K562 (cell line): ENCODE measurements at regions of chr6 and their contacts with region 1.

Region 1: GRCh38 chr6:144582939-144583613 is 297.9 kb downstream of the UTRN start:
- DNase-seq: peak in 2 of 4 experiments; percentile 30 to 61
- ATAC-seq: peak; percentile 78
- H3K4me3 ChIP-seq: peak overlapping the region; percentile 33
- H3K27ac ChIP-seq: peak overlapping the region; percentile 38; the same call in 1 of the 3 replicates
- H3K4me1 ChIP-seq: peaks cover 0 to 8% of the 10 kb centered on the region in 2 experiments; a peak in 2 of 5 replicates
- H3K27me3 ChIP-seq: no peaks in the 10 kb centered on the region
- CTCF ChIP-seq: no peak
- EP300 ChIP-seq: no peak
- POLR2A ChIP-seq: no peak
- RAD21 ChIP-seq: no peak

Region 2: DNA sequence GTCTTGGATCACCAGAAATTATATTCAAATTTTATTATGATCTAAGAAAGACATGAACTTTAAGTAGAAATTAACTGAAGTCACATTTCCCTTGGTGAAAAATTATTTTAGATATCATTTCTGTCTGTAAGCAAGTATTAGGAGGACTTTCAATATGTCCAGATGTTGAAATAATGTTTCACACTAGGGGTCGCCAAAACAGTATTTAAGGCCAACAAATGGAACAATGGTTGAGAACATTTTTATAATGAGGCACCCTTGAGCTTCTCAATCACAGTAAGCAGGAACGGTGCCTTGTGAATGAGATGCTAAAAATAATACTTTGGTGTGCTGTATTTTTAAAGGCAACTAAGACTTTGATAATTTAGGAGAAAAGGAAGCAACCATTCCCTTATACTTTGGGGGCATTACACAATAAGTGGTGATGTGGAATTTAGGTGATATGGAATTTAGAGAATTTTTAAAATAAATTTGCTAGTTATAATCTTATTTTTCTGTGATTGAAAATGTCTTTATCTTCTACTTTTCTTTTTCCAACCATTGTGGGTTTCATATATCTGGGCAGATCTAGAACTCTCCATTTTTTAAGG is 478.1 kb before region 1 on chr6:
- CTCF ChIA-PET with region 1: no interaction called
- POLR2A ChIA-PET with region 1: no interaction called
- in situ Hi-C with region 1: no loop called
- intact Hi-C with region 1: loop called (anchors 5 kb)
- DNase-seq: peak; percentile 31 to 82 (median 56)
- ATAC-seq: peak; percentile 91
- H3K4me3 ChIP-seq: no peak overlapping the region
- H3K27ac ChIP-seq: no peak overlapping the region
- H3K4me1 ChIP-seq: no peaks in the 10 kb centered on the region
- H3K27me3 ChIP-seq: peaks cover 0 to 2% of the 10 kb centered on the region in 2 experiments; a peak in 1 of 5 replicates
- CTCF ChIP-seq: peak; percentile 66 to 89 (median 70)
- EP300 ChIP-seq: no peak
- POLR2A ChIP-seq: no peak
- RAD21 ChIP-seq: peak; percentile 96 to 98

Region 3: DNA sequence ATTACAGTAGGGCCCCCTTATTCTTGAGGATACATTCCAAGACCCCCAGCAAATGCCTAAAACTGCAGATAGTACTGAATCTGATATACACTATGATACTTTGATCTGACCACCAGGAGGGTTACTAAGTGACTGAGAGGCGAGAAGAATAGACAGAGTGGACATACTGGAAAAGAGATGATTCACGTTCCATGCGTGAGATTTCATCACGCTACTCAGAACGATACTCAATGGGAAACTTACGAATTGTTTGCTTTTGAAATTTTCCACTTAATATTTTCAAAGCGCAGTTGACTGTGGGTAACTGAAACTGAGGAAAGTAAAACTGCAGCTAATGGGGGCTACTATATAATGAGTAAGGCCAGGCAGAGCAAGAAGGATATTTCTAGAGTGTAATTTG is 371.9 kb before region 1 on chr6:
- CTCF ChIA-PET with region 1: no interaction called
- POLR2A ChIA-PET with region 1: no interaction called
- in situ Hi-C with region 1: no loop called
- intact Hi-C with region 1: no loop called
- DNase-seq: no peak
- ATAC-seq: no peak
- H3K4me3 ChIP-seq: no peak overlapping the region
- H3K27ac ChIP-seq: no peak overlapping the region
- H3K4me1 ChIP-seq: peaks cover 10 to 14% of the 10 kb centered on the region in 2 experiments
- H3K27me3 ChIP-seq: peaks cover 0 to 17% of the 10 kb centered on the region in 2 experiments; a peak in 3 of 5 replicates
- CTCF ChIP-seq: no peak
- EP300 ChIP-seq: no peak
- POLR2A ChIP-seq: no peak
- RAD21 ChIP-seq: no peak

Region 4: DNA sequence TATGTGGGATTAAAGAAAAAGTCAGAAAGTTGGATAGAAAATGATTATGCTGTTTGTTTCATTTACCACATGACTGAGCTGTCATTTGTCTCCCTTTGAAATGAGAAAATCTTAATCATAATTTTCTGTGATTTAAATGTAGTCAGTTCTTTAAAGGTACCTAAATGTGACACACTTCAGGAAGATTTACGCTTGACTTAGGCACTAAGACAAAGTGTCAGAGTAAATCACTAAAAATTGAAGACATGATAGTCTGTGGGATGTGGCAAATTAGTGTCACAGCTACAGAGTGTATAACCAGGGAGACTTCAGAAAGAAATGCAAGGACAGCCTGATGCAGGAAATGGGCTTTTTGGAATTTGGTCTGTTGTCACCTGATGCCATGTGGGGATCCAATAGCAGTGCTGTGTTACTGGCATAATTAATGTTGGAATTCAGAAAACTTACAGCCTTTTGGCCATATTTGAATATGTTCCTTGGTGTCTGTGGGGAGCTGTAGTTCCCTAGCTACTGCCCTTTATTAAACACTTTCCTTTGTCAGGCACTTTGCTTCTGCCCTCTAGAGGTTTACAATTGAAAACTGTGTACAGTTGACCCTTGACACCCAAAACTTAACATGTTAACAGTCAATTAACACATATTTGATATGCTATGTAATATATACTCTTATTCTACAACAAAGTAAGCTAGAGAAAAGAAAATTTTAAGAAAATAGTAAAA is 195.9 kb after region 1 on chr6:
- CTCF ChIA-PET with region 1: no interaction called
- POLR2A ChIA-PET with region 1: no interaction called
- in situ Hi-C with region 1: no loop called
- intact Hi-C with region 1: loop called (anchors 1 kb)
- DNase-seq: no peak
- ATAC-seq: peak; percentile 60; the same call in 1 of the 3 replicates
- H3K4me3 ChIP-seq: no peak overlapping the region
- H3K27ac ChIP-seq: no peak overlapping the region
- H3K4me1 ChIP-seq: no peaks in the 10 kb centered on the region
- H3K27me3 ChIP-seq: no peaks in the 10 kb centered on the region
- CTCF ChIP-seq: peak in 2 of 3 experiments; percentile 18 to 31; a peak in 1 of 6 replicates
- EP300 ChIP-seq: no peak
- POLR2A ChIP-seq: no peak
- RAD21 ChIP-seq: peak in 1 of 2 experiments; percentile 45; a peak in 2 of 4 replicates

Region 5: GRCh38 chr6:144931172-144932035 is 348.3 kb after region 1 on chr6:
- CTCF ChIA-PET with region 1: interaction called, 11 read pairs
- POLR2A ChIA-PET with region 1: no interaction called
- in situ Hi-C with region 1: no loop called
- intact Hi-C with region 1: loop called (anchors 1 kb)
- DNase-seq: peak in 2 of 4 experiments; percentile 11 to 46
- ATAC-seq: peak; percentile 74
- H3K4me3 ChIP-seq: no peak overlapping the region
- H3K27ac ChIP-seq: no peak overlapping the region
- H3K4me1 ChIP-seq: no peaks in the 10 kb centered on the region
- H3K27me3 ChIP-seq: no peaks in the 10 kb centered on the region
- CTCF ChIP-seq: peak; percentile 32 to 67 (median 61); a peak in 5 of 6 replicates
- EP300 ChIP-seq: no peak
- POLR2A ChIP-seq: no peak
- RAD21 ChIP-seq: peak; percentile 60 to 84

Region 6: DNA sequence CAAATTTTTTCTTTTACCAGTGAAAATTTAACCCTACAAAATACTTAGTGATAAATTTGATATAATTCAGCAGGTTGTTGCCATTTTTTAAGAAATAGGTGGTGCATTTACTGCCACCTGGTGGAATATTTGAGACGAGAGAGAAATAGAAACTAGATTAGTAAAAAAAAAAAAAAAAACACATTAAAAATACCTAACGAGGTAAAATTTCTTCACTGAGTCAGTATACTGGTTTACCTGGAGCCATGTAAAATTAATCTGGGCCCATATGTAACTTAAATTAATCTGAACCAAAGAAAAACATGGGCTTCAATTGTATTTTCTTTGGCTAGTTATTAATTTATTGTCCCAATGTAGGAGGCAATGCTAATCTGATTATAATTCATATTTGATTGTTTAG is 631.5 kb after region 1 on chr6:
- CTCF ChIA-PET with region 1: interaction called, 34 read pairs
- POLR2A ChIA-PET with region 1: no interaction called
- in situ Hi-C with region 1: loop called (anchors 10 kb)
- intact Hi-C with region 1: loop called (anchors 1 kb)
- DNase-seq: peak in 2 of 4 experiments; percentile 13 to 33
- ATAC-seq: no peak
- H3K4me3 ChIP-seq: no peak overlapping the region
- H3K27ac ChIP-seq: no peak overlapping the region
- H3K4me1 ChIP-seq: no peaks in the 10 kb centered on the region
- H3K27me3 ChIP-seq: no peaks in the 10 kb centered on the region
- CTCF ChIP-seq: peak in 1 of 3 experiments; percentile 58; a peak in 3 of 6 replicates
- EP300 ChIP-seq: no peak
- POLR2A ChIP-seq: no peak
- RAD21 ChIP-seq: peak; percentile 54 to 62

Region 7: DNA sequence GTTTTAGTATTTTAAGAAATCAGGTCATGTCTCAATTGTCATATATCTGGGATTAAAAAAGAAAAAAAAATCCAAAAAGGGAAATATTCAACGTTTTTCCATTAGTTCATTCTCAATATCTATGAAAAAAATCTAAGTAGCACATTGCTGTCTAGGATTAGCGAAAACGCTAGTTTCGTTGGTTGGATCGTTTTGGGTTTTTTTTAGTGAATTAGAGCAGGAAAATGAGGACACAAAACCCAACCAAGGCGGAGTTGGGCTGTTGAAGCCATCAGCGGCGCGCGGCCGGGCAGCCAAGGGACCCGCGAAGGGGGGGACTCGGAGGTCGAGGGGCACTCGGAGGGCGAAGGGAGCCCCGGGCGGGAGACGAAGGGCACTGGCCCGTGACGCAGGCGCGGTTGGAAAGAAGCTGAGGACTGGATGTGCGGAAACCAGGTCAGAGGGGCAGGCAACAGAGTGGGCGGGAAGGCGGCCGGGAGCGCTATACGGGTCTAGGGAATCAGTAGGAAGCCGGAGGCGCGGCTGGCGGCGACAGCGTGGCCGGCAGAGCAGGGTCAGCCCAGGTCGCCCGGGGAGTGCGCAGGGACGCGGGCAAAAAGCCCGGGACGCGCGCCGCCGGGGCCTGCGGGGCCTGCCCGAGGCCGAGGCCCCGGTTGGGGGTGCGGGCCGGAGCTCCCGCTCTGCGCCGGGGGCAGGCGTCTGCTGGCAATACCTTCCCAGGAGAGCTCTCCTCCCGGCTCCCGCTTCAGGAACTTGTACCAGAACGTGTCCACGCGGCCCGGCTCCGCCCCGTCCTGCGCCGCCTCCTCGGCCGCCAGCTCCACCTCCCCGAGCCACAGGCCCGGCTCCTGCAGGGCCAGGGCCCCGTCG is 1151.6 kb after region 1 on chr6:
- CTCF ChIA-PET with region 1: no interaction called
- POLR2A ChIA-PET with region 1: no interaction called
- in situ Hi-C with region 1: no loop called
- intact Hi-C with region 1: loop called (anchors 10 kb)
- DNase-seq: peak; percentile 82 to 92 (median 83)
- ATAC-seq: peak; percentile 87
- H3K4me3 ChIP-seq: peak overlapping the region; percentile 54
- H3K27ac ChIP-seq: peak overlapping the region; percentile 92
- H3K4me1 ChIP-seq: peaks cover 16 to 21% of the 10 kb centered on the region in 2 experiments; a peak in 3 of 5 replicates
- H3K27me3 ChIP-seq: no peaks in the 10 kb centered on the region
- CTCF ChIP-seq: no peak
- EP300 ChIP-seq: no peak
- POLR2A ChIP-seq: peak; percentile 87
- RAD21 ChIP-seq: no peak